ENCODE measurements at regions of chr12 and their contacts with region 1.

Region 1: DNA sequence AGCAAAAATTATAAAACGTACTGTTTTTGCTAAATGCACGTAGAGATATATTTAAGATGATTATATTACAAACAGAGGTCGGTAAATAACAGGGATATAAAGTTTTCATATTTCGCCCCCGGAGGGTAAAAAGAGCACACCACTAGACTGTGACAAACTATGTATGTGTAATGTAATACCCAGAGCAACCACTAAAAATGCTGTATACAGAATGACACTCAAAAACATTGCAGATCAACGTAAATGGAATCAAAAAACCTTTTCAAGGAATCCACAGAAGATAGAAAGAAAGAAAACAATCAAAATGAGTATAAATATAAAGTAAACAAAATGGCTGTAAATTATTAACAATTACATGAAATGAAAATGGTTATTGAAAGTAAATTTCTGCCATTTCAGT is 37.6 kb upstream of the PRB4 start:
- DNase-seq: no peak
- ATAC-seq: no peak
- H3K4me3 ChIP-seq: no peak overlapping the region
- H3K4me3 Mint-ChIP-seq: no peak overlapping the region
- H3K27ac ChIP-seq: no peak overlapping the region
- H3K27ac Mint-ChIP-seq: no peak overlapping the region
- H3K4me1 ChIP-seq: no peaks in the 10 kb centered on the region
- H3K4me1 Mint-ChIP-seq: no peaks in the 10 kb centered on the region
- H3K27me3 ChIP-seq: no peaks in the 10 kb centered on the region
- H3K27me3 Mint-ChIP-seq: peaks cover 6% of the 10 kb centered on the region
- CTCF ChIP-seq: no peak

Region 2: GRCh38 chr12:11397366-11397765 is 49.6 kb after region 1 on chr12:
- CTCF ChIA-PET with region 1: no interaction called
- POLR2A ChIA-PET with region 1: no interaction called
- intact Hi-C with region 1: loop called (anchors 2 to 5 kb)
- DNase-seq: peak in 1 of 14 experiments; percentile 1
- ATAC-seq: no peak
- H3K4me3 ChIP-seq: no peak overlapping the region
- H3K4me3 Mint-ChIP-seq: no peak overlapping the region
- H3K27ac ChIP-seq: no peak overlapping the region
- H3K27ac Mint-ChIP-seq: no peak overlapping the region
- H3K4me1 ChIP-seq: no peaks in the 10 kb centered on the region
- H3K4me1 Mint-ChIP-seq: no peaks in the 10 kb centered on the region
- H3K27me3 ChIP-seq: peaks cover 0 to 7% of the 10 kb centered on the region in 2 experiments
- H3K27me3 Mint-ChIP-seq: peaks cover 5% of the 10 kb centered on the region
- CTCF ChIP-seq: no peak